Spleen (tissue), 13 donors: ENCODE measurements at regions of chr11 and their contacts with region 1.

Region 1: DNA sequence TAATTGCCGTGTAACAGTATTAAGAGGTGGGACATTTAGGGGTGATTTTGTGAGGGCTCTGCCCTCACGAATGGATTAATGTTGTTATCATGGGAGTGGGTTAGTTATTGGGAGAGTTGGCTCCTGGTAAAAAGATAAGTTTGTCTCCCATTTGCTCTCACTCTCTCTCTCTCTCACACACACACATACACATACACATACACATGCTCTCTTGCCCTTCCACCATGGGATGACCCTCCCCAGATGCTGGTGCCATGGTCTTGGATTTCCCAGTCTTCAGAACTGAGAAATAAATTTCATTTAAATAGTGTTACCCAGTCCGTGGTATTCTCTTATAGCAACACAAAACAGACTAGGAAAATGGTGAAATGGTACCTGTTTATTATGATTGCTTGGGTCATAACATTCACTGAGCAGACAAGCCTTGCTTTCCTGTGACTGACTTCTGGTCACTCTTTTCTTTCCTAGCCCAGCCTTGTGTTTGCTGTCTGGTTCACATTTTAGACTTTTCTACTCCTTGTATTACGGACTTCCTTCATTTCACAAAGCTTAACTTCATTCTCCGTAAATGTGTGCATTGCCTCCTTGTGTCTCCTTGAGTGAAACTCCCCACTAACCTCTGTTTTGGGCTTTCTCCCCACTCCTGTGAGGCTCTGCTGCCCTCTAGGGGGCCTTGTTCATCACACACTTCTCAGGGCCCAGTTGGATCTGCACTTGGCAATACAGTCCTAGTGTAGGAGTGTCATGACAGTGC is 206.5 kb upstream of the CTSC start:
- DNase-seq: peak; percentile 84
- H3K4me3 ChIP-seq: no peak overlapping the region
- H3K27ac ChIP-seq: no peak overlapping the region
- H3K4me1 ChIP-seq: peaks cover 0 to 7% (median 0%) of the 10 kb centered on the region in 6 donors
- H3K27me3 ChIP-seq: no peaks in the 10 kb centered on the region
- CTCF ChIP-seq: peak; percentile 66 to 93 (median 80)
- POLR2A ChIP-seq: no peak

Region 2: DNA sequence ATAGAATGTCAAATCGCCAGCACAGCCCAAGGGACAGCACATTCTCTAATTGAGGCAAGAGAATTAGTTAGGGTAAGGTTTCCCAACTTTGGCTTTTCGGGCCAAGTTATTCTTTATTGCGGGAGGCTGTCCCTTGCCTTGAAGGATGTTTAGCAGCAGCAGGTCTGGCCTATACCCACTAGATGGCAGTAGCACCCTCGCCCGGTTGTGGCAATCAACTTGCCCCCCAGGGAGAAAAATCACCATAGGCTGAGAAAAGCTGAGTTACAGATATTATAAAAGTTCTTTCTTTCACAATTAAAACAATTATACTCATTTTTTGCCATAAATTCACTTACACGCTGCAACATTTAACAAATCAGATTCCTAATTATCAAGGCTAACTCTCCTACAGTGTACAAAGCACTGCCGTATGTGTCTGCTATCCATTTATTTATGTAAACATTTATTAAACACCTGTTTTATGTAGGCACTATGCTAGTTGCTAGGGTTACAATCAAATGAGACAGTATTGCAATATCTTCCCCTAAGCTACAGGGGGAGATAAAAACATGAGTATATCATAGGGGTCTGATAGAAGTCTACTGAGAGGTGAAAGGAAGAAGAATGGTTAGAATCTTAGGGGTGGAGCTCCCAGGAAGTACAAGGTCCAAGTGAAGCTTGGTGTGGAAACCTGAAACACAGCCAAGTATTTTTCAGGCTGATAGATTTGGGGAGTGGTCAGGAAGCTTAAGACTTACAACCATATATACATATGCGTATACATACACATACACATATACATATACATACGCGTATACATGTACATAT is 821.1 kb before region 1 on chr11:
- intact Hi-C with region 1: loop called (anchors 10 kb)
- DNase-seq: no peak
- H3K4me3 ChIP-seq: no peak overlapping the region
- H3K27ac ChIP-seq: no peak overlapping the region
- H3K4me1 ChIP-seq: no peaks in the 10 kb centered on the region
- H3K27me3 ChIP-seq: no peaks in the 10 kb centered on the region
- CTCF ChIP-seq: peak in 9 of 11 experiments; percentile 16 to 60 (median 44)
- POLR2A ChIP-seq: no peak

Region 3: GRCh38 chr11:88569342-88569741 is 25.3 kb after region 1 on chr11:
- intact Hi-C with region 1: no loop called
- DNase-seq: no peak
- H3K4me3 ChIP-seq: no peak overlapping the region
- H3K27ac ChIP-seq: no peak overlapping the region
- H3K4me1 ChIP-seq: no peaks in the 10 kb centered on the region
- H3K27me3 ChIP-seq: peaks cover 0 to 3% (median 0%) of the 10 kb centered on the region in 7 donors
- CTCF ChIP-seq: no peak
- POLR2A ChIP-seq: no peak